ENCODE measurements at regions of chr20 and their contacts with region 1.

Region 1: GRCh38 chr20:57440678-57441520 is 49.7 kb downstream of the RBM38 start:
- DNase-seq: peak; percentile 58
- H3K4me3 ChIP-seq: no peak overlapping the region
- H3K27ac ChIP-seq: peak overlapping the region; percentile 78 to 86 (median 85)
- H3K4me1 ChIP-seq: peaks cover 14 to 40% (median 29%) of the 10 kb centered on the region in 4 donors
- H3K27me3 ChIP-seq: no peaks in the 10 kb centered on the region
- CTCF ChIP-seq: no peak
- EP300 ChIP-seq: peak; percentile 71
- POLR2A ChIP-seq: no peak

Region 2: GRCh38 chr20:57398231-57398821 is 42.6 kb before region 1 on chr20:
- in situ Hi-C with region 1: no loop called
- intact Hi-C with region 1: loop called (anchors 5 kb)
- DNase-seq: peak; percentile 88
- H3K4me3 ChIP-seq: peak overlapping the region in 1 of 4 donors; percentile 17
- H3K27ac ChIP-seq: peak overlapping the region; percentile 92 to 95 (median 93)
- H3K4me1 ChIP-seq: peaks cover 33 to 90% (median 61%) of the 10 kb centered on the region in 4 donors
- H3K27me3 ChIP-seq: no peaks in the 10 kb centered on the region
- CTCF ChIP-seq: no peak
- EP300 ChIP-seq: peak; percentile 20
- POLR2A ChIP-seq: peak; percentile 20

Region 3: GRCh38 chr20:57464715-57465211 is 23.9 kb after region 1 on chr20:
- in situ Hi-C with region 1: no loop called
- intact Hi-C with region 1: loop called (anchors 2 kb)
- DNase-seq: no peak
- H3K4me3 ChIP-seq: no peak overlapping the region
- H3K27ac ChIP-seq: no peak overlapping the region
- H3K4me1 ChIP-seq: peaks cover 0 to 2% (median 0%) of the 10 kb centered on the region in 4 donors
- H3K27me3 ChIP-seq: no peaks in the 10 kb centered on the region
- CTCF ChIP-seq: peak in 3 of 5 experiments; percentile 9 to 39 (median 17)
- EP300 ChIP-seq: no peak
- POLR2A ChIP-seq: no peak

Region 4: DNA sequence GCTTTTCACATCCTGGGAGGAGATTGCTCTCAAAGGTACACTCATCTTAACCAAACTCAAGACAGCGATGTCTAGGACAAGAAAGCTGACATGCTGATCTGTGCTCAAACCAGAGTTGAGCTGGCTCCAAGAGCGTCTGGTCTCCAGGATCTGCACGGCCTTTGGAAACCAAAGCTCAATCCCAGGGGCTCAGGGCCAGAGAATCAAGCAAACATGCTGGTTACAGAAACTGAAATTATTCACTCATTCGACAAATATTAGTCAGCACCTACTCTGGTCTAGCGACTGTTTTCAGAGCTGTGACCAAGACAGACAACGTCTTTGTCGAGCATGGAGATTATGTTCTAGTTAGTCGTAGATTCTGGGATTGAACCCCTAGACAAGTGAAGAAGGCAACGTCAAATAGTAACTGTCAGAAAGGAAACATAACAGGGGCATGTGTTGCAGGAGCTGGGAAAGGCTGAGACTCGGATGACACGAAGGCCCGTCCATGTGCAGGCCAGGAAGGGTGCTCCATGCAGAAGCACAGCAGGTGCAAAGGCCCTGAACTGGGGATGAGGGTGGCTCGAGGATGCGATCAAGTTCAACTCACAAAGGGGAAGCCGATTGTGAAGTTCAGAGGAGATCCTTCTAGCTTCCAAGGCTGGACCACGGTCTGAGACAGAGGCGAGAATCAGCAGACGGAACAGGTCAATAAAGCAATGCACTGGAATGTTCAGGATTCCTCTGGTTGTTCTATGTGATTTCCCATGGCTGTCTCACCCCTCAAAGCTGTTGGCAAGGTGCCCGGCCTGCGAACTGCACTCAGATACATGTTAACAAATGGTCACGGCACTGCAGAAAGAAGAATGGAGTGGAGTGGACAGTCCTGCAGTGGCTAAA is 107.5 kb after region 1 on chr20:
- in situ Hi-C with region 1: no loop called
- intact Hi-C with region 1: no loop called
- DNase-seq: no peak
- H3K4me3 ChIP-seq: no peak overlapping the region
- H3K27ac ChIP-seq: no peak overlapping the region
- H3K4me1 ChIP-seq: peaks cover 0 to 34% (median 19%) of the 10 kb centered on the region in 4 donors
- H3K27me3 ChIP-seq: no peaks in the 10 kb centered on the region
- CTCF ChIP-seq: no peak
- EP300 ChIP-seq: no peak
- POLR2A ChIP-seq: no peak

Measured in transverse colon (tissue), 4 donors.